SK-N-SH (cell line): ENCODE measurements at regions of chr22 and their contacts with region 1.

Region 1: GRCh38 chr22:25110846-25111578 is 88.6 kb upstream of the CRYBB3 start:
- DNase-seq: peak; percentile 86
- H3K4me3 ChIP-seq: peak overlapping the region; percentile 52 to 65
- H3K27ac ChIP-seq: peak overlapping the region; percentile 30 to 74
- H3K4me1 ChIP-seq: peaks cover 0 to 14% of the 10 kb centered on the region in 2 experiments; a peak in 1 of 4 replicates
- H3K27me3 ChIP-seq: no peaks in the 10 kb centered on the region
- CTCF ChIP-seq: peak; percentile 67
- EP300 ChIP-seq: no peak
- RAD21 ChIP-seq: peak; percentile 66

Region 2: GRCh38 chr22:24977370-24978221 is 133.4 kb before region 1 on chr22:
- CTCF ChIA-PET with region 1: no interaction called
- POLR2A ChIA-PET with region 1: no interaction called
- DNase-seq: no peak
- H3K4me3 ChIP-seq: no peak overlapping the region
- H3K27ac ChIP-seq: no peak overlapping the region; a peak in 2 of 4 replicates
- H3K4me1 ChIP-seq: peaks cover 16 to 24% of the 10 kb centered on the region in 2 experiments; a peak in 3 of 4 replicates
- H3K27me3 ChIP-seq: no peaks in the 10 kb centered on the region
- CTCF ChIP-seq: no peak
- EP300 ChIP-seq: no peak
- RAD21 ChIP-seq: no peak

Region 3: GRCh38 chr22:25125693-25126357 is 14.8 kb after region 1 on chr22:
- CTCF ChIA-PET with region 1: interaction called, 26 read pairs
- POLR2A ChIA-PET with region 1: no interaction called
- DNase-seq: no peak
- H3K4me3 ChIP-seq: no peak overlapping the region
- H3K27ac ChIP-seq: no peak overlapping the region
- H3K4me1 ChIP-seq: no peaks in the 10 kb centered on the region
- H3K27me3 ChIP-seq: no peaks in the 10 kb centered on the region
- CTCF ChIP-seq: no peak
- EP300 ChIP-seq: no peak
- RAD21 ChIP-seq: no peak

Region 4: DNA sequence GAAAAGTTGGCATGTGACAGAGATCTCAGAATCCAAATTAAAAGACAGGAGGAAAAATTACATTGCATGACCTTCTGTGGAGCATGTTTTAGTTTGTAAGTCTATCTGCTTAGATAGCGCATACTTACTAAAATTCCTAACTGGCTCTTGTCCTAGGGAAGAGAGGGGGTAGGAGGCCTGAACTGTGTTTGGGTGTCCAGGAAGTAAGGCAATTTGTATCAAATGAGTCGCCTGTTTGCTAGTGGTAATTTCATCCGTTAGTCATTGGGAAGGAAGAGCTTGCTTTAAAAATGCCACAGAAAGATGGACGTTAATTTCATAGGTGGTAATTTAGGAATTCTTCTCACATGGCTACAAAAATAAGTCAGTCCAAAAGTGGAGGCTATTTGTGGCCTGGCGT is 471.9 kb after region 1 on chr22:
- CTCF ChIA-PET with region 1: no interaction called
- POLR2A ChIA-PET with region 1: no interaction called
- DNase-seq: no peak
- H3K4me3 ChIP-seq: no peak overlapping the region
- H3K27ac ChIP-seq: peak overlapping the region; percentile 4 to 65; a peak in 3 of 4 replicates
- H3K4me1 ChIP-seq: peaks cover 0 to 8% of the 10 kb centered on the region in 2 experiments; a peak in 2 of 4 replicates
- H3K27me3 ChIP-seq: no peaks in the 10 kb centered on the region
- CTCF ChIP-seq: no peak
- EP300 ChIP-seq: no peak
- RAD21 ChIP-seq: no peak